BJ (cell line): ENCODE measurements at regions of chr12 and their contacts with region 1.

Region 1: DNA sequence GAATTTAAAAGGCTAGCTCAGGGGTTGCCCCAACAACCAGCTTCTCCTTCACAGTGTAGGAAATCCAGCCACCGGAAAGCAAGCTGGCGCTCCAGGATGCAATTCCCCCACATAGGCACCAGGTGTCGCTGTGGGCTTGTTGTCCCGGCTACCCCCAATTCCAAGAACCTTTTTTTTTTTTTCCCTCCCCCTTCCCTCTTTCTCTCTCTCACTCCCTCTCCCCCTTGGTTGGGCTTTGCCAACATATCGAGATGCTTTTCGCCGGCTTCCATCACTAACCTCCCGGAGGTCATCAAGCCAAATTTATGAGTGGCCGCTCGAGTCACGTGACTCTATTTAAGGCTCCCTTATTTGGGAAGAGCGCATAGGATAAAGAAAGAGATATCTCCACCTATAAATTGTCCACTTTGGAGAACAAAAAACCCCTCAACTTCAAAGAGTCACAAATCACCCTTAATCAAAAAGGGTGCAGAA is at the start of gene HOXC5:
- DNase-seq: no peak
- H3K4me3 ChIP-seq: peak within 1 kb of the TSS; percentile 33
- H3K27me3 ChIP-seq: peaks cover 1% of the 10 kb centered on the region
- CTCF ChIP-seq: peak; percentile 93
- polyA plus RNA-seq, gene HOXC5: 0.06 TPM in 1 of 2 replicates, not detected in the other

Region 2: DNA sequence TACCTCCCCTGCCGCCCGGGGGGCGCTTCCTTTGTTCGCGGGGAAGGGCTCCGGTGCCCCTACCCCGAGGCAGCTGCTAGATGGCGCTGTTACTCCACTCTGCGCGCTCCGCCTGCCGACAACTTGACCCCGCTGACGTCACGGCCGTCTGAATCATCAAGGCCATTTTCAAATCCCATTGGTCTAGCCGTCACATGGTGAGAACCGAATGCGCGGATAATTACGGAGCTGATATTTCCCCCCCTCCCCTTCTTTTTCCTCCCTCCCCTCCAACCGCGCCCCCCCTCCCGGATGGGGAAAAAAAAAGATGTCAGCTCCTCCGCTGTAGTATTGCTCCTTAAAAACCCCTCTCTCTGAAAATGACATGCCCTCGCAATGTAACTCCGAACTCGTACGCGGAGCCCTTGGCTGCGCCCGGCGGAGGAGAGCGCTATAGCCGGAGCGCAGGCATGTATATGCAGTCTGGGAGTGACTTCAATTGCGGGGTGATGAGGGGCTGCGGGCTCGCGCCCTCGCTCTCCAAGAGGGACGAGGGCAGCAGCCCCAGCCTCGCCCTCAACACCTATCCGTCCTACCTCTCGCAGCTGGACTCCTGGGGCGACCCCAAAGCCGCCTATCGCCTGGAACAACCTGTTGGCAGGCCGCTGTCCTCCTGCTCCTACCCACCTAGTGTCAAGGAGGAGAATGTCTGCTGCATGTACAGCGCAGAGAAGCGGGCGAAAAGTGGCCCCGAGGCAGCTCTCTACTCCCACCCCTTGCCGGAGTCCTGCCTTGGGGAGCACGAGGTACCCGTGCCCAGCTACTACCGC is 47.6 kb before region 1 on chr12 and contains the start of gene HOXC10:
- CTCF ChIA-PET with region 1: interaction called, 10 read pairs
- POLR2A ChIA-PET with region 1: no interaction called
- DNase-seq: no peak
- H3K4me3 ChIP-seq: peak within 1 kb of the TSS; percentile 60
- H3K27me3 ChIP-seq: peaks cover 2% of the 10 kb centered on the region; the same call in 1 of the 2 replicates
- CTCF ChIP-seq: peak; percentile 83
- polyA plus RNA-seq, gene HOXC10: 13.9 and 14.9 TPM in 2 replicates

Region 3: GRCh38 chr12:54017878-54018467 is 14.7 kb before region 1 on chr12:
- CTCF ChIA-PET with region 1: interaction called, 11 read pairs
- POLR2A ChIA-PET with region 1: interaction called, 3 read pairs
- DNase-seq: no peak
- H3K4me3 ChIP-seq: peak overlapping the region; percentile 72
- H3K27me3 ChIP-seq: peaks cover 13% of the 10 kb centered on the region
- CTCF ChIP-seq: no peak

Region 4: DNA sequence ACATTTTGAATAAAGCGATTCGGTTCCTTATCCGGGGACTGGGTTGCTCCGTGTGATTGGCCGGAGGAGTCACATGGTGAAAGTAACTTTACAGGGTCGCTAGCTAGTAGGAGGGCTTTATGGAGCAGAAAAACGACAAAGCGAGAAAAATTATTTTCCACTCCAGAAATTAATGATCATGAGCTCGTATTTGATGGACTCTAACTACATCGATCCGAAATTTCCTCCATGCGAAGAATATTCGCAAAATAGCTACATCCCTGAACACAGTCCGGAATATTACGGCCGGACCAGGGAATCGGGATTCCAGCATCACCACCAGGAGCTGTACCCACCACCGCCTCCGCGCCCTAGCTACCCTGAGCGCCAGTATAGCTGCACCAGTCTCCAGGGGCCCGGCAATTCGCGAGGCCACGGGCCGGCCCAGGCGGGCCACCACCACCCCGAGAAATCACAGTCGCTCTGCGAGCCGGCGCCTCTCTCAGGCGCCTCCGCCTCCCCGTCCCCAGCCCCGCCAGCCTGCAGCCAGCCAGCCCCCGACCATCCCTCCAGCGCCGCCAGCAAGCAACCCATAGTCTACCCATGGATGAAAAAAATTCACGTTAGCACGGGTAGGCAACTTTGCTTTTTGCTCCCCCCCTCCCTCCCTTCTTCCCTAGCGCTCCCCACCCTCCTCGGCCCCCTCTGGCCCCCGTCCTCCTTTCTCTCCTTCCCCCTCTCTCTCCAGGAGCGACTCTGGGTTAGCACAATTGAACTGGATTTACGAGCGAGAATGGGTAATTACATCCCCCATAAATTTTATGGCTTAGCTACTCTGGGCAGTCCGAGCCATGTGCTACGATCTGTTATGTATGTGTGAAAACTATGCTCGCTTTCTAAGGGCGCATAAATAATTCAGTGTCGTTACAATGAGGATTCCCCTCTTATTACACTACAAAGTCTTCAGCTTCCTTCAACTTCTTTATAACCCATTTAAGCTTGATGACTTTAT is 21.4 kb after region 1 on chr12 and contains the start of gene HOXC4:
- CTCF ChIA-PET with region 1: interaction called, 15 read pairs
- POLR2A ChIA-PET with region 1: no interaction called
- DNase-seq: no peak
- H3K4me3 ChIP-seq: peak within 1 kb of the TSS; percentile 9
- H3K27me3 ChIP-seq: peaks cover 21% of the 10 kb centered on the region
- CTCF ChIP-seq: no peak
- polyA plus RNA-seq, gene HOXC4: 0.69 and 0.93 TPM in 2 replicates

Region 5: DNA sequence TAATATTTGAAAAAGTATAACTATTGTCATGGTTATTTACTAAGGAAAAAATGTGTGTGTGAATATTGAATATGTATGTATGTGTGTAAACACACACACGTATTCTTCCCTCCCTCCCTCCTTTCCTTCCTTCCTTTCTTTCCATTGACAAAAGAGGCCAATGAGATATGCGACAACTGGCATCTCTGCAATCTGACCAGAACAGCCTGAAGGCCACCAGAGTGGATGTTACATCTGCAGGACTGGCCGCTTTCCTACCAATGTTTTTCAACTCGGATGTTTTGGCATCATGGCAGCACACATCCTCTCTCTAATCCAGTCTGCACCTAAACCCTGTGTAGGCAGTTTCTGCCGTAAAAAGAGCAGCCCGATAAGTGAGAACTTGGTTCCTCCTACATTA is 41.6 kb after region 1 on chr12:
- CTCF ChIA-PET with region 1: no interaction called
- POLR2A ChIA-PET with region 1: no interaction called
- DNase-seq: no peak
- H3K4me3 ChIP-seq: no peak overlapping the region
- H3K27me3 ChIP-seq: peaks cover 7% of the 10 kb centered on the region
- CTCF ChIP-seq: no peak

Region 6: GRCh38 chr12:54191550-54192022 is 158.9 kb after region 1 on chr12:
- CTCF ChIA-PET with region 1: interaction called, 73 read pairs
- POLR2A ChIA-PET with region 1: no interaction called
- DNase-seq: no peak
- H3K4me3 ChIP-seq: no peak overlapping the region
- H3K27me3 ChIP-seq: peaks cover 6% of the 10 kb centered on the region
- CTCF ChIP-seq: peak; percentile 92

Region 7: DNA sequence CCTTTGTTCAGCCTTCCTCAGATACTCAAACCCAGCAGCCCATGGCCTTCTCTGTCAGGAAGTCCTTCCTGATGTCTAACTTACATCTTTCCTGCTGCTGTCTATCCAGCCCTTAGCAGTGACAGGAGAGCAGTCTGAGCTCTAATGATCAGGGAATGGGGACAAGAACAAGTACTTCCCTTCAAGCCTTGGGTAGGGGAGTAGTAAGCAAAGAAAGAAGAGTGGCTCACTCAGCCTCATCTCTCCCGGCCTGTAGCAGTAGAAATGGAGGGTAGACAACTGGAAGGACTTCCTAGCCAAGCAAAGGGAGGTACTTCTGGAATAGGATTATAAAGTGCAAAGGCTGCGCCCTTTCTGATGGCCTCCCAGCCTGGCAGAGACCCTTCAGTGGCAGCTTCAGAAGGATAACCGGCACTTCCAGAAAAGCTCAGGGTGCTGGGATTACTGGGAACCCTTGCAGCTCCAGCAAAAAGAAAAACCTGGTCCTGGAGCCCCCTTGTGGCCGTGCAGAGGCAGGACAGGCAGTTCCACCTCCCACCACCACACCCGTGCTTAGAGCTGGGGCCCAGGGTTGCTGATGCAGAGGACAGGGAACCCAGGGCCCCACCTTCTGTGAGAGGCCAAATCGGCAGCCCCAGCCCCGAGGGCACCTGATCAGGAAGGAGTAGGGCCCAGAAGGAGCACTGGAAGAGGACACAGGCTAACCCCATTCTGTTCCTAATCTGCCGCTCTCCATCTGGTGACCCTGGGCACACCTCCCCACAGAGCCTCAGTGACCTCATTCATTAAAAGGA is 168.5 kb after region 1 on chr12:
- CTCF ChIA-PET with region 1: interaction called, 88 read pairs
- POLR2A ChIA-PET with region 1: no interaction called
- DNase-seq: no peak
- H3K4me3 ChIP-seq: no peak overlapping the region
- H3K27me3 ChIP-seq: peaks cover 10% of the 10 kb centered on the region
- CTCF ChIP-seq: peak; percentile 96

Region 8: GRCh38 chr12:54207484-54208294 is 175.0 kb after region 1 on chr12:
- CTCF ChIA-PET with region 1: interaction called, 88 read pairs
- POLR2A ChIA-PET with region 1: no interaction called
- DNase-seq: no peak
- H3K4me3 ChIP-seq: no peak overlapping the region
- H3K27me3 ChIP-seq: peaks cover 14% of the 10 kb centered on the region
- CTCF ChIP-seq: peak; percentile 98